A673 (cell line): ENCODE measurements at regions of chr9 and their contacts with region 1.

Region 1: DNA sequence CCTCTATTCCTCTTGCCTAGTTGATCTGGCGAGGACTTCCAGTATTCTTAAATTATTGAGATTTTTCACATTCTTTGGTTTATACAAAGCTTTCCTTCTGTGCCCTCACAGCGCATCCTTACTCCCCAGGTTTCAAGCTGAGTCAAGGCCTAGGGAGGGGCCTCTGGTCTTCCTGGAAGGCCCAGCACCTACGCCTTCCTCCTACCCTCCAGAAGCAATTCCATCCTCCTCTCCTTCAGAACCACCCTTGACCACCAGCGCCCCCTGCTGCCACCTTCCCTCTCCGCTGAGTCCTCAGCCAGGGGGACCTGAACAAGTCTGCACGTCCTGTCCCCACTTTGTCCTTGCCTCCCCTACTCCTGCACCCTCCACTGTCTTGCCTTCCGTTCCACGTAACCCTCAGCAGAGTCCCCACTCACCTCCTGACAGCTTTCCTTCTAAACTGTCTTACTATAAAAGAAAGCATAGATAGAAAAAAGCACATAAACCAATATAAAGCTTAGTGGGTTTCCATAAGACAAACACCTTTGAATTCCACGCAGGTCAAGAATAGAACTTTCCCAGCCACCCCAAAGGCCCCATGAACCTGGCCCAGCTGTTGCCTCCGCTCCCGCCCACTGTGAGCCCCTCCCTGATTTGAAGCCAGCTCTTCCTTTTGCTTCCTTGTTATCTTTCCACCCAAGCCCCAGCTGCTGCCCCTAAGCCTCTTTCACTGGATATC is 63.0 kb upstream of the CTSL start:
- DNase-seq: peak; percentile 81
- H3K4me3 ChIP-seq: no peak overlapping the region
- H3K27ac ChIP-seq: peak overlapping the region; percentile 48
- H3K4me1 ChIP-seq: peaks cover 18% of the 10 kb centered on the region
- H3K27me3 ChIP-seq: no peaks in the 10 kb centered on the region
- CTCF ChIP-seq: peak; percentile 81

Region 2: DNA sequence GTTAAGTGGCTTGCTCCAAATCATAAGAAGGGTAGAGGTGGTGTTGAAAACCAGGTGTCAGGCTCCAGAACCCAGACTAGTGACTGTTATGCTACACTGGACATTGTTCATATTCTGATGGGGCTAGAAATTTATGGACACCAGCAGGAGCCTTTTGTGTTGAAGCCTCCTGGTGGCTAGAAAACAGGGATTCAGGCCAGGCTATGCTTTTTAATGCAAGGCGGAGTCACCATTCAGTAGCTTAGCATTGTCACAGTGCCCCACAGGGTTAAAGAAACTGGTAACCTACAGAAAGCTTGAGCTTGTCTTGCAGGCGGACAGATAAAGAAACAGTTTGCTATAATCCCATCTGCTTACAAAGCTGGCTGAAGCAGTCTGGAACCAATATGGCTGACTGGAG is 1540.7 kb before region 1 on chr9:
- CTCF ChIA-PET with region 1: no interaction called
- POLR2A ChIA-PET with region 1: no interaction called
- intact Hi-C with region 1: no loop called
- DNase-seq: peak; percentile 10
- H3K4me3 ChIP-seq: no peak overlapping the region
- H3K27ac ChIP-seq: no peak overlapping the region
- H3K4me1 ChIP-seq: no peaks in the 10 kb centered on the region
- H3K27me3 ChIP-seq: no peaks in the 10 kb centered on the region
- CTCF ChIP-seq: no peak

Region 3: GRCh38 chr9:86413966-86414880 is 1248.7 kb before region 1 on chr9:
- CTCF ChIA-PET with region 1: no interaction called
- POLR2A ChIA-PET with region 1: no interaction called
- intact Hi-C with region 1: loop called (anchors 10 kb)
- DNase-seq: peak; percentile 74
- H3K4me3 ChIP-seq: no peak overlapping the region
- H3K27ac ChIP-seq: no peak overlapping the region
- H3K4me1 ChIP-seq: no peaks in the 10 kb centered on the region
- H3K27me3 ChIP-seq: no peaks in the 10 kb centered on the region
- CTCF ChIP-seq: peak; percentile 81

Region 4: GRCh38 chr9:87405677-87406542 is 257.1 kb before region 1 on chr9:
- CTCF ChIA-PET with region 1: no interaction called
- POLR2A ChIA-PET with region 1: no interaction called
- intact Hi-C with region 1: loop called (anchors 10 kb)
- DNase-seq: peak; percentile 90
- H3K4me3 ChIP-seq: no peak overlapping the region
- H3K27ac ChIP-seq: peak overlapping the region; percentile 93
- H3K4me1 ChIP-seq: peaks cover 52% of the 10 kb centered on the region
- H3K27me3 ChIP-seq: no peaks in the 10 kb centered on the region
- CTCF ChIP-seq: no peak

Region 5: DNA sequence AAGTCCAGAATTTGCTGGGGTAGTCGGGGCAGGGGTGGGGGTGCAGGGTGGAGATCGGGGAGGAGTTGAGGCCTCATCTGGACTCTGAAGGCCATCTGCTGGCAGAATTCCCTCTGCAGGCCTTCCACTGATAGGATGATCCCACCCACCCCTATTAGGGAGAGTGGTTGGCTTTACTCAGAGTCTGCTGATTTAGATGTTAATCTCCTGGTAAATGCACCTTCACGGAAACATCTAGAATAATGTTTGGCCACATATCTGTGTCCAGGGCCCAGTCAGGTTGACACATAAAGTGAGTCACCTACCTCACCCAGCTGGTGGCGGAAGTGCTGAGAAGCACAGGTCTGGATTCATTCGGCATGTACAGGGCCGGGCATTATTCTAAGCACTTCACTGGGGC is 115.3 kb before region 1 on chr9:
- CTCF ChIA-PET with region 1: no interaction called
- POLR2A ChIA-PET with region 1: no interaction called
- intact Hi-C with region 1: no loop called
- DNase-seq: no peak
- H3K4me3 ChIP-seq: no peak overlapping the region
- H3K27ac ChIP-seq: peak overlapping the region; percentile 24
- H3K4me1 ChIP-seq: peaks cover 44% of the 10 kb centered on the region
- H3K27me3 ChIP-seq: no peaks in the 10 kb centered on the region
- CTCF ChIP-seq: no peak

Region 6: GRCh38 chr9:87615547-87616148 is 47.3 kb before region 1 on chr9:
- CTCF ChIA-PET with region 1: no interaction called
- POLR2A ChIA-PET with region 1: no interaction called
- intact Hi-C with region 1: no loop called
- DNase-seq: no peak
- H3K4me3 ChIP-seq: no peak overlapping the region
- H3K27ac ChIP-seq: no peak overlapping the region
- H3K4me1 ChIP-seq: peaks cover 36% of the 10 kb centered on the region
- H3K27me3 ChIP-seq: no peaks in the 10 kb centered on the region
- CTCF ChIP-seq: no peak

Region 7: DNA sequence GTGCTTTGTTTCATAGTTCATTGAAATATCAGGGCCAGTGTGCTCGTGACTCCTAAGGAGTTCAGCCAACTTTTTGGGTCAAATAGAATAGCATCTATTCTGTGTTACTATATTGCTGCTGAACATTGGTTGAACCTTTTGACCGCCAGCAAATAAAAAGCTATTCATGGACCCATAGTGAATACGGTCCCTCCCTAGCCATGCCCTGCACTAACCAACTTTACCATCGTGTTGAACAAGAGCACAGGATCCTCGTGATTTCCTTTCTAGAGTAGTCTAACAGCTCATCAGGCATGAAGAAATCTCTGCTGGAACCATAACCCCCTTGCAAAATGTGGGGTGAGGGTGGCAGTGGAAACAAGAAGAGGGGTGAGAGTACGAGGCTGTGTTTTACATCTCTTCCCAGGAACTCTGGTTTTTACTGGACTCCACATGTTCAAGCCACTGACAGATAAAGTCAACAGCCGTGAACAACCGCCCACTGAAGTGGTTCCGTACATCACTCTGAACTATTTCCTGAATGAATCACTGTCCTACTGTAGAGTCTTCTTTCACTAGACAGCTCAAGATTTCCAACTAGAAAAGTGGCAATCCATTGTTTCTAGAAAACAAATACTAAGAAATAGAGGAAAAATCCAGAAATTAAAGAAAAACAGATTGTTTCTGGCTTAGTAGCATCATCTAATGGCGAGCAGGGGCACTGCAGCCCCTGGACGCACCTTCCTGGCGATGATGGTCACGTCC is 149.6 kb after region 1 on chr9:
- CTCF ChIA-PET with region 1: no interaction called
- POLR2A ChIA-PET with region 1: no interaction called
- intact Hi-C with region 1: no loop called
- DNase-seq: peak; percentile 54
- H3K4me3 ChIP-seq: no peak overlapping the region
- H3K27ac ChIP-seq: no peak overlapping the region
- H3K4me1 ChIP-seq: peaks cover 6% of the 10 kb centered on the region
- H3K27me3 ChIP-seq: no peaks in the 10 kb centered on the region
- CTCF ChIP-seq: peak; percentile 96